OCI-LY7 (cell line): ENCODE measurements at regions of chr19 and their contacts with region 1.

Region 1: DNA sequence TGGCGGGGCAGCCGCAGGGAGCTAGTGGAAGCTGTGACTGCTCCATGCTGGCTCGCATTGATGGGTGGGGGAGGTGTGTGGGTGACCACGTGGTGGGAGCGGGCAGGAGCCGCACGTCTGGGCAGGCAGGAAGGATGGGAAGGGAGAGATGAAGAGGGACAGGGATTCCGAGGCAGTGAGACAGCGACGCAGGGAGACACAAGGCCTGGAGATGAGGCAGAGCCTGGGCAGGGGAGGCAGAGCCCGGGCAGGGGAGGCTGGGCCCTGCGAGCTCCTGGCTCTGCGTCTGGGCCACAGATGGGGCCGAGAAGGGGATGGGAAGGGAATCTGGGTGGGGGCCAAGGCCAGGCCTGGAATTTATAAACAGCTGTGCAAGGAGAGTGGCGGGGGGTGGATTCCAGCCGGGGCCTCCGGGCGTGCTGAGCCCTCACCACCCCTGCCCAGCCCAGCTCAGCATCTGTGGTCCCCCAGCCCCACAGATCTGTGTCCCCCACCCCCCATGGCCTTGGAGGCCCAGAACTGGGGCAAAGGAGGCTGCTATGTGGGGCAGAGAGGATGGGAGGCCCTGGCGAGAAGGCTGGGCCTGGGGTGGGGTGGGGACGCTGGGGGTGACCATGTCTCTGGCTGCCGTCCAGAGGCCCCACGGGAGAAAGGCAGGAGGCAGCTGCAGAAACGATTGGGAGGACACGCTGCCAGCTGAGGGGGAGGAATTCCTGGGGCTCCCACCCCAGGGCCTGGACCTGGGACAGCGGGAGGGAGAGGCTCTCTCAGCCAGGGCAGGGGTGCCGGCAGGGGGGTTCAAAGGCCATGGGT is 6.0 kb downstream of the EHD2 start:
- DNase-seq: no peak
- H3K4me3 ChIP-seq: no peak overlapping the region
- H3K27ac ChIP-seq: no peak overlapping the region
- H3K4me1 ChIP-seq: no peaks in the 10 kb centered on the region
- CTCF ChIP-seq: no peak

Region 2: DNA sequence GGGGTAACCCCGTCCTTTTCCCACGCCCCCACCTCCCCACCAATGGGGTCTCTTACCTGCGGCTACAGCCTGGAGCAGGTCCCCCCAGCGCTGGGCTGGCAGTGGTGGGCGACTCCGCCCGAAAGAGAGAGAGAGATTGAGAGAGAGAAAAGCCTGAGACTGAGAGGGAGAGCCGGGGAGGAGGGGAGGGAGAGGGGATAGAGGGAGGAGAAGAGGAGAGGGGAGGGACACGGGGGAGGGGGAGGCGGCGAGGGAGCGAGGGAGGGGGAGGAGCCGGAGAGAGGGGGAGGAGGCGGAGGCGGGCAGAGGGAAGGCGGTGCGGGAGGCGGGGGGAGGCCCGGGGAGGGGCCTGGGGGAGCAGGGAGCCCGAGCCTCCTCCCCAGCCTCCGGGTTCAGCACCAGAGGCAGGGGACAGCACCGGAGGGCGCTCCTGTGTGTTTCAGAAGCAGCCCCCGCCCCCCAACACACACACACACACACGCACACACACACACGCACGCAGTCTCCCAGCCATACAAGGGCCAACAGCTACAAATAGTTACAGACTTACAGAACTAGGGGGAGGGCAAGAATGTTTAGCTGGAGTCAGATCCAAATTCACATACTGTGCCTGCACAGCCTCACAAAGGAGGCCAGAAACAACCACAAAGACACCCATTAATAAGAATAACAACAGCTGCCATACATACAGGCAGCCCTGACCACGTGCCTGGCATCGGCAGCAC is 247.4 kb before region 1 on chr19 and contains the start of gene SLC8A2:
- CTCF ChIA-PET with region 1: no interaction called
- POLR2A ChIA-PET with region 1: interaction called, 11 read pairs
- intact Hi-C with region 1: no loop called
- DNase-seq: peak; percentile 34
- H3K4me3 ChIP-seq: no peak within 1 kb of the TSS
- H3K27ac ChIP-seq: no peak within 1 kb of the TSS
- H3K4me1 ChIP-seq: no peaks in the 10 kb centered on the region
- CTCF ChIP-seq: no peak
- total RNA-seq, gene SLC8A2: 0.13 TPM in 1 of 2 replicates, not detected in the other

Region 3: GRCh38 chr19:47518139-47518538 is 201.1 kb before region 1 on chr19:
- CTCF ChIA-PET with region 1: no interaction called
- POLR2A ChIA-PET with region 1: no interaction called
- intact Hi-C with region 1: no loop called
- DNase-seq: peak; percentile 97
- H3K4me3 ChIP-seq: peak overlapping the region; percentile 28
- H3K27ac ChIP-seq: peak overlapping the region; percentile 85
- H3K4me1 ChIP-seq: peaks cover 77% of the 10 kb centered on the region
- CTCF ChIP-seq: no peak

Region 4: DNA sequence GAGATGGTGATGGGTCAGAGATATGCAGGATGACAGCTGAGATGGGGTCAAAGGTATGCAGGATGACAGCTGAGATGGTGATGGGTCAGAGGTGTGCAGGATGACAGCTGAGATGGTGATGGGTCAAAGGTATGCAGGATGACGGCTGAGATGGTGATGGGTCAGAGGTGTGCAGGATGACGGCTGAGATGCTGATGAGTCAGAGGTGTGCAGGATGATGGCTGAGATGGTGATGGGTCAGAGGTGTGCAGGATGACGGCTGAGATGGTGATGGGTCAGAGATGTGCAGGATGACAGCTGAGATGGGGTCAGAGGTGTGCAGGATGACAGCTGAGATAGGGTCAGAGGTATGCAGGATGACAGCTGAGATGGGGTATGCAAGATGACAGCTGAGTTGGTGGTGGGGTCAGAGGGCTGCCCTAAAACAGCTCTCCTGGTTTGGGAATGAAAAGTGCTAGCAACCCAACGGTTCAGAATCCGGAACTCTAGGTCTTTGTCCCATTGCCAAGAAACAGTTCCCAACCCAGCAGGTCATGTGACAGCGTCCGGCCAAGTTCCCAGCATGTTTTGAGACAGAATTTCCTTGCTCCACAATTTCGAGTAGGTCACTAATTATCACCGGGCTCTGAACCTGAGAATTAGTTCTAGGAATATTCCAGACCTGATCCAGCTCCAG is 62.5 kb after region 1 on chr19:
- CTCF ChIA-PET with region 1: no interaction called
- POLR2A ChIA-PET with region 1: no interaction called
- intact Hi-C with region 1: no loop called
- DNase-seq: no peak
- H3K4me3 ChIP-seq: no peak overlapping the region
- H3K27ac ChIP-seq: no peak overlapping the region
- H3K4me1 ChIP-seq: peaks cover 8% of the 10 kb centered on the region
- CTCF ChIP-seq: no peak